Activated CD4-positive, alpha-beta T cell treated with anti-CD3 and anti-CD28 coated beads for 36 hours (primary cell): ENCODE measurements at regions of chr20 and their contacts with region 1.

Region 1: GRCh38 chr20:63056236-63056948 is 49.6 kb upstream of the BHLHE23 start:
- DNase-seq: peak; percentile 71
- ATAC-seq: peak; percentile 71
- H3K4me3 Mint-ChIP-seq: no peak overlapping the region
- H3K27ac Mint-ChIP-seq: no peak overlapping the region
- H3K4me1 Mint-ChIP-seq: no peaks in the 10 kb centered on the region
- H3K27me3 Mint-ChIP-seq: peaks cover 16% of the 10 kb centered on the region

Region 2: DNA sequence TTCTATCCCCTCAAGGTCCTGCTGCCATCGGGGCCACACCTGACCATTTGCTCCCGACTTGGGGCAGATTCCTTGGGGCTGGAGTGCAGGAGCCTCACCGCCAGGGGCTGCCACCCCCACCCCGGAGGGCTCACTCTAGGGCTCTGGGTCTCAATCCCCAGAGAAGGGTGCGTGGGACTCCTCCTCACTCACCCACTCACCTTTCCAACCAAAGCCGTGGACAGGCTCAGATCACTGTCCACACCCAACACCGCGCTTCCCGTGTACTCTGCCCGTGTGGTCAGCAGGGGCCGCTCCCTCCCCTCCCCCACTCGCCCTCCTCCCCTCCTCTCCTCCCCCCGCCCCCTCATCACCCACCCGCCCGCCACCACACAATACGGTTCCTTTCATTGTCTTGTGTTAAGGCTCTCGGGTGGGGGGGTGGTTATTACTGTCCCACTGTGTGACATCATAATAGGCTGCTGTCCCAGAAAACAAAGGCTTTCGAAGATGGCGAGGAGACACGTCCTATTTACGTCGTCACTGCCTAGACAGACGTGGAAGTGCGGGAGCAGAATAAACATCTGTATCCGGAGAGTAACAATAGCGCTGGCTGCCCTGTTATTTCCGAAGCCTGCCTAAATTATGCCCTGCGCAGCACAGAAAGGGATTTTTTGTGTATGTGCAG is 73.7 kb after region 1 on chr20:
- CTCF ChIA-PET with region 1: no interaction called
- POLR2A ChIA-PET with region 1: no interaction called
- intact Hi-C with region 1: no loop called
- DNase-seq: peak; percentile 1
- ATAC-seq: no peak
- H3K4me3 Mint-ChIP-seq: no peak overlapping the region
- H3K27ac Mint-ChIP-seq: no peak overlapping the region
- H3K4me1 Mint-ChIP-seq: no peaks in the 10 kb centered on the region
- H3K27me3 Mint-ChIP-seq: peaks cover 13% of the 10 kb centered on the region

Region 3: GRCh38 chr20:63230800-63231268 is 174.4 kb after region 1 on chr20:
- CTCF ChIA-PET with region 1: no interaction called
- POLR2A ChIA-PET with region 1: no interaction called
- intact Hi-C with region 1: loop called in 1 of 2 experiments (anchors 5 kb)
- DNase-seq: peak; percentile 42
- ATAC-seq: peak; percentile 33
- H3K4me3 Mint-ChIP-seq: no peak overlapping the region
- H3K27ac Mint-ChIP-seq: no peak overlapping the region
- H3K4me1 Mint-ChIP-seq: peaks cover 2% of the 10 kb centered on the region
- H3K27me3 Mint-ChIP-seq: peaks cover 16% of the 10 kb centered on the region